CD4-positive, alpha-beta T cell (primary cell): ENCODE measurements at regions of chr14 and their contacts with region 1.

Region 1: DNA sequence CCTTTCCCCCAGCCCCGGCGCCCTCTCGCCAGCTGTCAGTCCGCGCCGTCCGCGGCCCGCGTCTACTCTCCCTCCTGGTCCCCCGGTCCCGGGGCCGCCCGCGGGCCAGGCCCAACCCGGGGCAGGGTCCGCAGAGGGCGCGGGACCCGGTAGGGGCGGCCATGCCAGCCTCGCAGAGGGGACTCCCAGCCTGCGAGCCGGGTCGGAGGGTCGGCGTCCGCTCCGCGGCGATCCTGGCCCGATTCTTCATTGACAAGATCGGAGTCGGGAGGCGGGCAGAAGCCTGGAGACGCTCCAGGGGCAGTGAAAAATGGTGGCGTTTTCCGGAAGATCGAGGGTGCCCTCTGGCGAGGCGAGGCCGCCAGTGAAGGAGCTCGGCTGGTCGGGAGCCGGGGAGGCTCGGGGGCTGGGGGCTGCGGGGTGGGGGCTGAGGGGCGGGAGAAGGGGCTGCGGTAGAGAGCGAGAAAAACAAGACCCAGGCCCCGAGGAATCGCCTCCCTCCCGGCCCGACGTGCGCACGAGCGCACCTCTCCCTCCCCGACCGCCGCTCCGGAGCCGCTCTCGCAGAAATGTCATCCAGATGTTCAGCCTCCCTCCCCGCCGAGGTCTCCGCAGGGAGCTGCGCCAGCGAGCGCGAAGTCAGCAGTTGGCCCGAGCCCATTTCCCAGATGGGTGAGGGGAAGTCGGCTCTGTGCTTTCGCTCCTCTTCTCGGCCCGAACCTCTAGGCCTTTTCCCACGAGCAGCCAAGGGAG is 647 bp upstream of the TGFB3 start:
- DNase-seq: peak; percentile 64 to 89 (median 73)
- ATAC-seq: peak; percentile 69
- H3K4me3 ChIP-seq: peak overlapping the region; percentile 58
- H3K4me3 Mint-ChIP-seq: peak overlapping the region; percentile 93
- H3K27ac ChIP-seq: peak overlapping the region; percentile 40 to 43
- H3K27ac Mint-ChIP-seq: peak overlapping the region; percentile 83
- H3K4me1 ChIP-seq: peaks cover 57% of the 10 kb centered on the region
- H3K4me1 Mint-ChIP-seq: peaks cover 58% of the 10 kb centered on the region
- H3K27me3 ChIP-seq: no peaks in the 10 kb centered on the region
- H3K27me3 Mint-ChIP-seq: no peaks in the 10 kb centered on the region
- CTCF ChIP-seq: peak; percentile 61

Region 2: DNA sequence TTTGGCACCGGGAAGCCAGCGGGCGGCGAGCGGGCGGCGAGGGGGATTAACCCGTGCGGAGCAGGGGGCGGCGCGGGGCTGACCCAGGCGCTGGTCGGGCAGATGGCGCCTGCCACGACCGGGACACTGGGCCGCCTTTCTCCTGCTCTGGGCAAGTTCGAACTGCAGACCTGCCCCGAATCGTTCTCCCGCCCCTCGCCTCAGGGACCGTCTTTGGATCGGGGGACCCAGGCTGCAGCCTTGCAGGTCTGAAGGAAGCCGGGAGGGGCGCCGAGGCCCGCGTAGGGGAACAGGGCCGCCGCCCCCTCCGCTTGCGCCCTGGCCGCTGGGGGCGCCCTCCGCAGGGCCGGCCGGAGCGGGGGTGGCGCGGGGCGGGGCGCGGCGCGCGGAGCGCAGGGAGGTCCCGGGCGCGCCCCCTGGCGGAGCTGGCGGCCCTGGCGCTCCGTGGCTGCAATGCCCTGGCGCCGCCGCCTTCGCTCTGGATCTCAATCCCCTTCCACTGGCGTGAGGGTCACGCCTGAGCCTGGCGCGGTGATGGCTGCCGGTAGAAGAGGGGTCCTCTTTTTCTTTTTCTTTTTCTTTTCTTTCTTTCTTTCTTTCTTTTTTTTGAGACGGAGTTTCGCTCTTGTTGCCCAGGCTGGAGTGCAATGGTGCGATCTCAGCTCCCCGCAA is 1370.0 kb before region 1 on chr14:
- CTCF ChIA-PET with region 1: no interaction called
- POLR2A ChIA-PET with region 1: no interaction called
- intact Hi-C with region 1: loop called in 1 of 2 experiments (anchors 5 kb)
- DNase-seq: peak; percentile 65 to 95 (median 81)
- ATAC-seq: peak; percentile 79
- H3K4me3 ChIP-seq: peak overlapping the region; percentile 65
- H3K4me3 Mint-ChIP-seq: peak overlapping the region; percentile 79
- H3K27ac ChIP-seq: no peak overlapping the region
- H3K27ac Mint-ChIP-seq: no peak overlapping the region
- H3K4me1 ChIP-seq: peaks cover 54% of the 10 kb centered on the region
- H3K4me1 Mint-ChIP-seq: peaks cover 29% of the 10 kb centered on the region
- H3K27me3 ChIP-seq: no peaks in the 10 kb centered on the region
- H3K27me3 Mint-ChIP-seq: peaks cover 9% of the 10 kb centered on the region
- CTCF ChIP-seq: peak; percentile 52

Region 3: DNA sequence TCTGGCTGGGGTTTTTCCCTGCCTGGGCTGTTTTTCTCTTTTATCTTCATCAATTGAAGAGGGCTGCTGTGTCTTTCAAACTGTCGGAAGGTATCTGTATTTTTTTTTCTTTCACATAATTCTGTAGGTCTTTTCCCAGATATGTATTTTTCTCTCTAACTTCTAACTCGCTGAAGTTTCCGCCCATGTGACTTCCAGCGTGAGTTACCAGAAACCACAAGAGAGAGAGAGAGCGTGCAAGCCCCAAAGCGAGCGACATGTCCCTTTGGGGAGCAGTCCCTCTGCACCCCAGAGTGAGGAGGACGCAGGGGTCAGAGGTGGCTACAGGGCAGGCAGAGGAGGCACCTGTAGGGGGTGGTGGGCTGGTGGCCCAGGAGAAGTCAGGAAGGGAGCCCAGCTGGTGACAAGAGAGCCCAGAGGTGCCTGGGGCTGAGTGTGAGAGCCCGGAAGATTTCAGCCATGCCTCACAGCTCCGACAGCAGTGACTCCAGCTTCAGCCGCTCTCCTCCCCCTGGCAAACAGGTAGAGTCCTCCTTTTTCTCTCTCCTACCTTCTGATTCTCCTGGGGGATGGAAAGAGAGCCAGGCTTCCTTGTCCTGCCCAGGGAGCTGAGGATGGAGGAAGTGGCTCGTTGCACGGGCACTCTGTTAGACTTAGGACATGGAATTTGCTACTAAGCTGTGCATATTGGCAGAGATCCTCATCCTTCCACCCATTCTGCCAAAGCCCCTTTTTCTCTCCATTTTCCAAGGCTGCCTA is 460.0 kb before region 1 on chr14 and contains the start of gene BATF:
- CTCF ChIA-PET with region 1: no interaction called
- POLR2A ChIA-PET with region 1: no interaction called
- intact Hi-C with region 1: no loop called
- DNase-seq: peak; percentile 57 to 91 (median 69)
- ATAC-seq: peak; percentile 80
- H3K4me3 ChIP-seq: peak within 1 kb of the TSS; percentile 67
- H3K4me3 Mint-ChIP-seq: peak within 1 kb of the TSS; percentile 100
- H3K27ac ChIP-seq: peak within 1 kb of the TSS; percentile 76 to 87
- H3K27ac Mint-ChIP-seq: peak within 1 kb of the TSS; percentile 96
- H3K4me1 ChIP-seq: peaks cover 69% of the 10 kb centered on the region
- H3K4me1 Mint-ChIP-seq: peaks cover 81% of the 10 kb centered on the region
- H3K27me3 ChIP-seq: no peaks in the 10 kb centered on the region
- H3K27me3 Mint-ChIP-seq: no peaks in the 10 kb centered on the region
- CTCF ChIP-seq: no peak
- total RNA-seq, gene BATF: 6.7 to 7.8 TPM

Region 4: GRCh38 chr14:75577729-75578101 is 404.7 kb before region 1 on chr14:
- CTCF ChIA-PET with region 1: interaction called, 8 read pairs
- POLR2A ChIA-PET with region 1: interaction called, 5 read pairs
- intact Hi-C with region 1: loop called (anchors 2 to 10 kb)
- DNase-seq: peak; percentile 46 to 85 (median 67)
- ATAC-seq: peak; percentile 85
- H3K4me3 ChIP-seq: peak overlapping the region; percentile 81
- H3K4me3 Mint-ChIP-seq: peak overlapping the region; percentile 92
- H3K27ac ChIP-seq: no peak overlapping the region
- H3K27ac Mint-ChIP-seq: peak overlapping the region; percentile 64
- H3K4me1 ChIP-seq: peaks cover 28% of the 10 kb centered on the region
- H3K4me1 Mint-ChIP-seq: peaks cover 25% of the 10 kb centered on the region
- H3K27me3 ChIP-seq: no peaks in the 10 kb centered on the region
- H3K27me3 Mint-ChIP-seq: no peaks in the 10 kb centered on the region
- CTCF ChIP-seq: peak; percentile 83

Region 5: GRCh38 chr14:75709207-75709812 is 273.1 kb before region 1 on chr14:
- CTCF ChIA-PET with region 1: interaction called, 31 read pairs
- POLR2A ChIA-PET with region 1: interaction called, 14 read pairs
- intact Hi-C with region 1: loop called (anchors 1 kb)
- DNase-seq: peak; percentile 36 to 79 (median 50)
- ATAC-seq: peak; percentile 66
- H3K4me3 ChIP-seq: no peak overlapping the region
- H3K4me3 Mint-ChIP-seq: no peak overlapping the region
- H3K27ac ChIP-seq: no peak overlapping the region
- H3K27ac Mint-ChIP-seq: no peak overlapping the region
- H3K4me1 ChIP-seq: no peaks in the 10 kb centered on the region
- H3K4me1 Mint-ChIP-seq: no peaks in the 10 kb centered on the region
- H3K27me3 ChIP-seq: no peaks in the 10 kb centered on the region
- H3K27me3 Mint-ChIP-seq: no peaks in the 10 kb centered on the region
- CTCF ChIP-seq: peak; percentile 77

Region 6: DNA sequence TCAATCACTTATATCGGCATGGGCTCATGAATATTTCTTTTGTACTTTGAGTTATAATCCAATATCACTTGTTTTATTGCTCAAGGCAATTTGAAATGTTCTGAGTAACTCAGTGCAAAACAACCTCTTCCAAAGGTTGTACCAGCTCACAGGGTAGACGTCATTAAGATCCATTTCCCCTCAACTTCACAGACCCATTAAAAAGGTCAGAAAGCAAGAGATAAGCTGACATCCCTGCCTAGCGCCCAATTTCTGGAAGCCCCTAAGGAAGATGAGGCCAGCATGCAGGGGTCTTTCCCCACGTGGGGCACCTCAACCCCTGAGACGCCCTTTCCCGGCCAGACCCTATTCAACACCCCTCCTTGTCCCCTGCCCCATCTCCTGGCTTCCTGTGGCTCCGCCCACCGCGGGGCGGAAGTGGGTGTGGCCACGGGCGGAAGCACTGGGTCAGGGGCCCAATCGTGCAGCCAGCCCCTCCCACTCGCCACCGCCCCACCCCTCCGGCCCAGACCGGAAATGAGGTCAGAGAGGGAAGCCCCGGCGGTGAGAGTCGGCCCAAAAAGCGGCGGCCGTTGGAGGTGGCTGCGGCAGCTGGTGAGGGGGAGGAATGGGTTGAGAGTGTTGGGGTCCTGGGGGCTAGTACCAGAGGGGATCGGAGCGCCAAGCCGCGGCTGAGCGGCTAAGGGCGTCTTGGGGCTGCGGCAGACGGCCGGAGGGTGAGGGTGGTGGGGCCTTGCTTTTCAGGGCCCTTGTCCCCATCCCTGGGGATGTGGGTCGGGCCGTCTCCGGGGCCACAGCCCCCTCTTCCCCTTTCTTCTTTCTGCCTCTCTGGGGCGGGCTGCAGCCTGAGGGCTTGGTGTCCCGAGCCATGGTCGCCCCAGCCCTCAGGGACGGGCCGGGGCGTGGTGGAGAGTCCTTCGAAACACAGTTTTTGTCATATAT is 169.2 kb after region 1 on chr14 and contains the start of gene GPATCH2L:
- CTCF ChIA-PET with region 1: interaction called, 5 read pairs
- POLR2A ChIA-PET with region 1: interaction called, 4 read pairs
- intact Hi-C with region 1: loop called in 1 of 2 experiments (anchors 5 kb)
- DNase-seq: peak; percentile 93 to 99 (median 96)
- ATAC-seq: peak; percentile 85
- H3K4me3 ChIP-seq: peak within 1 kb of the TSS; percentile 97
- H3K4me3 Mint-ChIP-seq: peak within 1 kb of the TSS; percentile 96
- H3K27ac ChIP-seq: peak within 1 kb of the TSS; percentile 94 to 95
- H3K27ac Mint-ChIP-seq: peak within 1 kb of the TSS; percentile 95
- H3K4me1 ChIP-seq: peaks cover 39% of the 10 kb centered on the region
- H3K4me1 Mint-ChIP-seq: peaks cover 57% of the 10 kb centered on the region
- H3K27me3 ChIP-seq: no peaks in the 10 kb centered on the region
- H3K27me3 Mint-ChIP-seq: no peaks in the 10 kb centered on the region
- CTCF ChIP-seq: no peak
- total RNA-seq, gene GPATCH2L: 56.0 to 61.5 TPM

Region 7: GRCh38 chr14:77457522-77458290 is 1475.3 kb after region 1 on chr14 and contains the starts of genes AHSA1 and VIPAS39:
- CTCF ChIA-PET with region 1: no interaction called
- POLR2A ChIA-PET with region 1: no interaction called
- intact Hi-C with region 1: loop called in 1 of 2 experiments (anchors 5 kb)
- DNase-seq: peak; percentile 86 to 99 (median 88)
- ATAC-seq: peak; percentile 94
- H3K4me3 ChIP-seq: peak within 1 kb of the TSS; percentile 98
- H3K4me3 Mint-ChIP-seq: peak within 1 kb of the TSS; percentile 100
- H3K27ac ChIP-seq: peak within 1 kb of the TSS; percentile 79 to 96
- H3K27ac Mint-ChIP-seq: peak within 1 kb of the TSS; percentile 90
- H3K4me1 ChIP-seq: peaks cover 31% of the 10 kb centered on the region
- H3K4me1 Mint-ChIP-seq: peaks cover 48% of the 10 kb centered on the region
- H3K27me3 ChIP-seq: no peaks in the 10 kb centered on the region
- H3K27me3 Mint-ChIP-seq: no peaks in the 10 kb centered on the region
- CTCF ChIP-seq: no peak
- total RNA-seq, gene AHSA1: 28.7 to 33.7 TPM
- total RNA-seq, gene VIPAS39: 7.6 to 8.7 TPM